ENCODE measurements at regions of chr3 and their contacts with region 1.

Region 1: GRCh38 chr3:70959506-70960286 is 623.8 kb downstream of the FOXP1 start:
- DNase-seq: no peak
- H3K4me3 ChIP-seq: no peak overlapping the region
- H3K27ac ChIP-seq: peak overlapping the region in 1 of 4 donors; percentile 28
- H3K4me1 ChIP-seq: peaks cover 13 to 48% (median 43%) of the 10 kb centered on the region in 4 donors
- H3K27me3 ChIP-seq: no peaks in the 10 kb centered on the region
- CTCF ChIP-seq: no peak
- EP300 ChIP-seq: no peak
- POLR2A ChIP-seq: no peak

Region 2: DNA sequence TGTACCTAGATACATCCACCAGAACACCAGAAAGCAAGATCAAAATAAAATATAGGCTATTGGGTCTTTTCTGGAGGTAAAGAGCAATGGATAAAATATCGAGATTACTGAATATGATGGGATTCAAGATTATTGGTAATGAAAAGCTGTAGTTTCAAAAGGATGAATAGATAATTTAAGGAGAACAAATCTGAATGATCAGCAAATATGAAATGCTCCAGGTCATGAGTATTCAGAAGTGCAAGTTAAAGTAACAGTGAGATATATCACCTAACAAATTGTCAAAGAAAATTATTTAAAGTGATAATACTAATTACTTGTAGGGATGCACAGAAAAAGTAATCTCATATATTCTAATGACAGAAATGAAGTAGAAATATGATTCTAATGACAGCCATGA is 237.7 kb before region 1 on chr3:
- intact Hi-C with region 1: loop called (anchors 5 kb)
- DNase-seq: no peak
- H3K4me3 ChIP-seq: no peak overlapping the region
- H3K27ac ChIP-seq: no peak overlapping the region
- H3K4me1 ChIP-seq: peaks cover 0 to 16% (median 7%) of the 10 kb centered on the region in 4 donors
- H3K27me3 ChIP-seq: no peaks in the 10 kb centered on the region
- CTCF ChIP-seq: no peak
- EP300 ChIP-seq: no peak
- POLR2A ChIP-seq: no peak

Measured in esophagus muscularis mucosa (tissue), 4 donors.